Heart left ventricle (tissue), 16 donors: ENCODE measurements at regions of chr1 and their contacts with region 1.

Region 1: DNA sequence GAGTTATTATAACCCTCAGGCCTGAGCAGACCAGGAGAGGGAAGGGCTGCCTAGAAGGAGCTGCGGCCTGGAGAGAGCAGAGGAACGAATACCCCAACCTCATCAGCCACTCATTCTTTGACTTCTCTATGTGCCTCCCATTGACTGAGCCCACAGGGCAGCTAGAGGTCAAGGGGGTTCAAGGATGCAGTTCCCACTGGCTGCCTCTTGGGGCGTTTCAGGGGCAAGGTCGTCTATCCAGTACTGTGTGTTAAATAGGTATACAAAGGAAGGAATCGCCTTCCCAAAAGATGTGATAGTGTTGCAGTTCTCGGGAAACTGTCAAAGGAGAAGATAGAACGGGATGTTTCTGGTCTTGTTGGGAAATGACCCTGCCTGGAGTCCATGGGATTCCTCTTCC is 250.6 kb downstream of the PRDM2 start:
- DNase-seq: no peak
- ATAC-seq: no peak
- H3K4me3 ChIP-seq: no peak overlapping the region
- H3K27ac ChIP-seq: peak overlapping the region in 1 of 12 donors; percentile 18
- H3K4me1 ChIP-seq: no peaks in the 10 kb centered on the region
- H3K27me3 ChIP-seq: peaks cover 0 to 25% (median 0%) of the 10 kb centered on the region in 9 donors
- CTCF ChIP-seq: peak in 4 of 12 donors; percentile 12 to 18 (median 16)
- POLR2A ChIP-seq: no peak

Region 2: DNA sequence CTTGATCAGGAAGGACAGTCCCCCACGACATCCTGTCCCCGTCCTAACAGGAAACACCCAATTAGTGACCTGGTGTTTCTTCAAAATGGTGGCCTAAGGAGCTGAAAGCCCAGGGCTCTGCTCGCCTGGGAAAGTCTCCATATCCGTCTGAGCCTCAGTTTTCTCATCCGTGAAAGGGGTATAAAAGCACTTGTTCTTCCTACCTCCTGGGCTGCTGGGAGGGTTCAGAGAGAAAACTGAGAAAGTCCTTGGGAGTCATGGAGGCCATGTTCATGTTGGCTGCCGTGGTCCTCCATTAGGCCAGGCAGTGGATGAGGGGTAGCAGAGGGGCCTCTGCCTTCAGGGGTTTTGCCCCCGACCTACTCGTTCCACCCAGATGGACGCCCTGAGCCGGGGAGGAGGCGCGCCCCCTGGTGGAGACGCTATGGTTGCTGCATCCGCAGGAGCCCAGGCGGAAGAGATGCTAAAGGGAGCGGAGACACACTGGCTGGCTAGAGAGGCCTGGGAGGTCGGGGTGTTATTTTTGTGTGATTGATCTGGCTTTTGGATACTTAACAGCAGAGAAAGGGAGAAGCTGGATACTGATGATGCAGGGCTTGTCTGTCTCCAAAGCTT is 137.1 kb before region 1 on chr1:
- intact Hi-C with region 1: loop called in 1 of 10 experiments (anchors 10 kb)
- DNase-seq: peak in 2 of 5 donors; percentile 50 to 79
- ATAC-seq: peak in 1 of 4 donors; percentile 30
- H3K4me3 ChIP-seq: no peak overlapping the region
- H3K27ac ChIP-seq: no peak overlapping the region
- H3K4me1 ChIP-seq: peaks cover 0 to 12% (median 1%) of the 10 kb centered on the region in 12 donors
- H3K27me3 ChIP-seq: no peaks in the 10 kb centered on the region
- CTCF ChIP-seq: peak in 11 of 12 donors; percentile 15 to 69 (median 51)
- POLR2A ChIP-seq: no peak

Region 3: DNA sequence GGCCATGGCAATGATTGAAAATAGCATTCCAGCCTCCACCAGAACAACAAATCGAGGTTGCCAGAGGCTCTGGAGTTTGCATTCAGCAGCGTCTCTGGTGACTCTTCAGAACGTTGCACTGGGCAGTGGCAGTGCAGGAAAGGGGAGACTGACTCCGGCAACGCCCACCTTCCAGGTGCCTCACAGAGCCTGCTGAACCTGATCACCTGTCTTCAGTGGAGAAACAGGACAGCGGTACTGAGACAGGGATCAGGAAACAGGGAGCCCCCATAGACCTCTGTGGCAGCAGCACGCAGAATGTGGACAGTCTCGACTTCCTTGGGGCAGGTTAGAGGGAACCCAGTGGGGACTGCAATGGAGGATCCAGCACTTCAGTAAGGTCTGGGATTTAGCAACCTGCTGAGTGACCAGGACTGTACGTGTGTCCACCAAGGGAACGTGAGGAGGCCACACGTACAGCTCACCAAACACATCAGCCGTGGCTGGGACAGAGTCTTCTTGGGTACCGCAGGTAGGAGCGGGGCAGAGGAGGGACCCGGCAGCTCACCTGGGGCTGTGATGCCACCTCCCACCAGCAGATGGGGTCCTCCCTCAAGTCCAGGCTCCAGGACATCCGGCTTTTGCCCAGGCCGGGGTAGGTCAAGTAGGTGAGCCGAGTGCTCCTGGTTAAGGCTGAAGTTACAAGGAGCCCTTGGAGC is 122.0 kb before region 1 on chr1:
- intact Hi-C with region 1: loop called in 3 of 10 experiments (anchors 10 kb)
- DNase-seq: no peak
- ATAC-seq: peak in 2 of 4 donors; percentile 24 to 49
- H3K4me3 ChIP-seq: no peak overlapping the region
- H3K27ac ChIP-seq: no peak overlapping the region
- H3K4me1 ChIP-seq: peaks cover 0 to 3% (median 0%) of the 10 kb centered on the region in 12 donors
- H3K27me3 ChIP-seq: peaks cover 0 to 19% (median 0%) of the 10 kb centered on the region in 9 donors
- CTCF ChIP-seq: peak in 10 of 12 donors; percentile 18 to 53 (median 40)
- POLR2A ChIP-seq: no peak